ENCODE measurements at regions of chr9 and their contacts with region 1.

Region 1: GRCh38 chr9:127734747-127735529 is at the start of gene TOR2A:
- DNase-seq: peak; percentile 99
- H3K27ac ChIP-seq: peak within 1 kb of the TSS; percentile 98
- CTCF ChIP-seq: peak; percentile 98

Region 2: DNA sequence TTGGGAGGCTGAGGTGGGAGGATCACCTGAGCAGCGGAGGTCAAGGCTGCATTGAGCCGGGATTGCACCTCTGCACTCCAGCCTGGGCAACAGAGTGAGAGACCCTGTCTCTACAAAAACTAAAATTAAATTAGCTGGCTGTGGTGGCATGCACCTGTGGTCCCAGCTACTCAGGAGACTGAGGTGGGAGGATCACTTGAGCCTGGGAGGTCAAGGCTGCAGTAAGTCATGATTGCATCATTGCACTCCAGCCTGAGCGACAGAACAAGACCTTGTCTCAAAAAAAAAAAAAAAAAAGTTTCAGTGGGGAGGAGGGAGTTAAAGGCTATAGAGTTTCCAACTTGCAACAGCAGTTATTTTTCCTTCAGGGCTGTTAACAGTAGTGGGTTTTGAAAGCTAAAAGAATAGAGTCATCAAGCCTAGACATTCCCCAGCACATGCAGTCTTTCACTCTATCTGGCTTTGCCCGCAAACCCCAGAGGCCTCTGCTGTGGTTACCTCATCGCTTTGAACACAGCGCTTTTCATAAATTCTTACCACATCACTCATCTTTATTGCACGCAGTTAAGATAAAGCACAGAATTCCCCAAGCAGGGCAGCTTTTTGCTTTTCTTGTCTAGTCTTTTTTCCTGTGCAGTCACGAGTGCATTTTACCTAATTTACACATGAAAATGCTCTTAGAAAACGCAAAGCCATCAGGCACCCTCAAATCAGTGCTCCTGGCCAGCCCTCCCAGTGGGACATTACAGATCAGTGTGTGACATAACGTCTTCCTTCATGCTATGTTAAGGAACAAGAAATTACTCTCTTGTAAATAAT is 346.7 kb before region 1 on chr9:
- CTCF ChIA-PET with region 1: no interaction called
- POLR2A ChIA-PET with region 1: no interaction called
- DNase-seq: peak; percentile 97
- H3K27ac ChIP-seq: peak overlapping the region; percentile 93
- CTCF ChIP-seq: no peak

Region 3: GRCh38 chr9:127586537-127586936 is 148.4 kb before region 1 on chr9:
- CTCF ChIA-PET with region 1: interaction called, 30 read pairs
- POLR2A ChIA-PET with region 1: interaction called, 7 read pairs
- DNase-seq: peak; percentile 90
- H3K27ac ChIP-seq: peak overlapping the region; percentile 93
- CTCF ChIP-seq: peak; percentile 99

Region 4: DNA sequence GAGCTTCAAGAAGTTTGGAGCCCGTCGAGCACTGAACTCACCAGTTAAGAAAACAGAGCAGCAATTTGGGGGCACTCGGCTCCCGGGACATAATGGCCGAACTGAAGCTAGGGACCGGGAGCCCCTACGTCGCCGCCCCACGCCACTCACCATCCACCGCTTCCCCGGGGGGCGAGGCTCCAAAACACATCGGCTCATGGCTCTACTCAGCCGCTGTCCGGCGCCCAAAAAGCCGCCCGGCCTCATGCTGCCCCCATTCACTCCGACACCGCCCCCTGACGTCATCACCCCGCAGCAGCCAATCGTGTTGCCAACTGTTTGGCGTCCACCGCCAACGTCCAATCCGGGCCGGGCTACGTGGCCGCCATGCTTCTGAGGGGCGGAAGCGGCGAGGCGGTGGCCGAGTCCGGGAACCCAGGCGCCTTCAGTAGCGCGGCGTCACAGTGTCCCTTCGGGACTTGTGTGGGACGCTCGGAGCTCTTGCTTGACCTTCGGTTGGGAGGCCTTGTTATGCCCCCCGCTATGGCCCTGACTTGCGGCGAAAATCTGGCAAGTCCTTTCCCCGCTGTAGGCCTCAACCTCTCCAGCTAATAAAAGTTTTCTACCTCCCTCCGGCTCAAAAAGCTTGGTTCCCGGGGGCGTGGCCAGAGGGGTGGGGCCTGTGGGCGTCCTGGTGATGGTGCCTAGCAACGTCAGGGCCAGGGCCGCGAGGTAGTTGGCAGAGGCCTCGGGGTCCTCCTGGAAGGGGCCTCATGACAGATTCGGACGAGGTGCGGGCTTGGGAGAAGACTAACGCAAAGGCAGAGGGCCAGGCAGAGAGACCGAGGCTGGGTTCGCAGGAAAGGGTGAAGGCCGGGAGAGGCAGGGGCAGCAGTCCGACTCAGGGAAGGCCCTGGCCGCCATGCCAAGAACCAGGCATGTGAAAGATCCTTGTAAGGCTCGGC is 19.3 kb before region 1 on chr9 and contains the starts of genes PTRH1 and TTC16:
- CTCF ChIA-PET with region 1: interaction called, 30 read pairs
- POLR2A ChIA-PET with region 1: interaction called, 4 read pairs
- DNase-seq: peak; percentile 100
- H3K27ac ChIP-seq: peak within 1 kb of the TSS; percentile 95
- CTCF ChIP-seq: no peak

Region 5: DNA sequence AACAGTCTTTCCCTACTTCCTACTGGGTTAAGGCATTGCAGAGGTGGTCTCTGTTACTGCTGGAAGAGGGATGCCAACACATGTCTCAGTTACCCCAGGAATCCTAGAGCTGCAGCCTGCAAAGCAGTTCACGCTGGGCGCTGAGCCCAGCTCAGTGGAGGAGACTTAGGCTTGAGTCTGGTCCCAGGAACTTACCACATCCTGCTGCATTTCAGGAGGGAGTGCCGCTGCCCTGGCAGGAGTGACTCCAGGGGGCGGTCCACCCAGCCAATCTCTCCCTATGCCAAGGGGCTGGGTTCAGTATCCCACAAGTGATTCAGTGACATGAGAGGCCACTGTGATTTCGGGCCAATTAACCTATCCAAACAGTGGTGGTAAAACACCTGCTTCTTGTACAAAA is 11.5 kb before region 1 on chr9:
- CTCF ChIA-PET with region 1: interaction called, 30 read pairs
- POLR2A ChIA-PET with region 1: no interaction called
- DNase-seq: no peak
- H3K27ac ChIP-seq: peak overlapping the region; percentile 95
- CTCF ChIP-seq: no peak

Region 6: GRCh38 chr9:127779136-127779981 is 44.4 kb after region 1 on chr9:
- CTCF ChIA-PET with region 1: interaction called, 13 read pairs
- POLR2A ChIA-PET with region 1: interaction called, 8 read pairs
- DNase-seq: no peak
- H3K27ac ChIP-seq: peak overlapping the region; percentile 55
- CTCF ChIP-seq: no peak

Region 7: GRCh38 chr9:127785023-127785932 is 50.3 kb after region 1 on chr9:
- CTCF ChIA-PET with region 1: interaction called, 13 read pairs
- POLR2A ChIA-PET with region 1: interaction called, 8 read pairs
- DNase-seq: peak; percentile 97
- H3K27ac ChIP-seq: peak overlapping the region; percentile 93
- CTCF ChIP-seq: peak; percentile 98

Region 8: DNA sequence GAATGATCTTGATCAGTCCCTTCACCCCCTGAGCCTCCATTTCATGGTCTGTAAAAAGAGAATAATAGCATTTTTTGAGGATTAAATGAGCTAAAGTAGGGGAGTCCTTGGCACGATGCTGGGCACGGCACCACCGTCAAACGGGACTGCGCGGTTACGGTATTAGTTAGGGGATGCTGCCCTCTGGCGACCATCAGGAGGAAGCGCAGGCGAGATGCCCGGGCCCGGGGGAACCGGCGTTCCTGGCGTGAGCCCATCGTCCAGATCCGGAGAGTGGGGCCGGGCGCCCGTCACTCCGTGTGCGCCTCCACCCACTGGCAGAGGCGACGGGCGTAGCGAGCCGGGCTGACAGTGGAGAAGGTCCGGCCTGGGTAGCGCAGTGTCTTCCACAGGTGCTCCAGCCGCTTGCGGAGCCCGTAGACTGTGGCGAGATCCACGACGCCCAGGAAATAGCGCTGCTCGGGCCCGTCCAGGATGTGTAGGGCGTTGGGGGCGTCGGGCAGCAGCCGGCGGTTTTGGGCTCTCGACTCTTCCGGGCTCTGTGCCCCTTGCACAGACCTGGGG is 186.7 kb after region 1 on chr9:
- CTCF ChIA-PET with region 1: interaction called, 15 read pairs
- POLR2A ChIA-PET with region 1: no interaction called
- DNase-seq: peak; percentile 92
- H3K27ac ChIP-seq: peak overlapping the region; percentile 97
- CTCF ChIP-seq: peak; percentile 99

Measured in RWPE1 (cell line).